Activated B cell treated with CpG ODN at 0.5 μM for 24 hours (primary cell): ENCODE measurements at regions of chr2 and their contacts with region 1.

Region 1: GRCh38 chr2:162123806-162124758 is 28.0 kb downstream of the GCG start:
- DNase-seq: no peak
- ATAC-seq: peak; percentile 53
- H3K4me3 Mint-ChIP-seq: no peak overlapping the region
- H3K27ac Mint-ChIP-seq: no peak overlapping the region
- H3K4me1 Mint-ChIP-seq: peaks cover 18% of the 10 kb centered on the region
- H3K27me3 Mint-ChIP-seq: no peaks in the 10 kb centered on the region
- CTCF ChIP-seq: peak; percentile 77

Region 2: GRCh38 chr2:161426922-161427663 is 697.0 kb before region 1 on chr2:
- CTCF ChIA-PET with region 1: no interaction called
- POLR2A ChIA-PET with region 1: no interaction called
- intact Hi-C with region 1: loop called (anchors 10 kb)
- DNase-seq: no peak
- ATAC-seq: no peak
- H3K4me3 Mint-ChIP-seq: peak overlapping the region; percentile 68
- H3K27ac Mint-ChIP-seq: no peak overlapping the region
- H3K4me1 Mint-ChIP-seq: peaks cover 31% of the 10 kb centered on the region
- H3K27me3 Mint-ChIP-seq: peaks cover 63% of the 10 kb centered on the region
- CTCF ChIP-seq: no peak

Region 3: DNA sequence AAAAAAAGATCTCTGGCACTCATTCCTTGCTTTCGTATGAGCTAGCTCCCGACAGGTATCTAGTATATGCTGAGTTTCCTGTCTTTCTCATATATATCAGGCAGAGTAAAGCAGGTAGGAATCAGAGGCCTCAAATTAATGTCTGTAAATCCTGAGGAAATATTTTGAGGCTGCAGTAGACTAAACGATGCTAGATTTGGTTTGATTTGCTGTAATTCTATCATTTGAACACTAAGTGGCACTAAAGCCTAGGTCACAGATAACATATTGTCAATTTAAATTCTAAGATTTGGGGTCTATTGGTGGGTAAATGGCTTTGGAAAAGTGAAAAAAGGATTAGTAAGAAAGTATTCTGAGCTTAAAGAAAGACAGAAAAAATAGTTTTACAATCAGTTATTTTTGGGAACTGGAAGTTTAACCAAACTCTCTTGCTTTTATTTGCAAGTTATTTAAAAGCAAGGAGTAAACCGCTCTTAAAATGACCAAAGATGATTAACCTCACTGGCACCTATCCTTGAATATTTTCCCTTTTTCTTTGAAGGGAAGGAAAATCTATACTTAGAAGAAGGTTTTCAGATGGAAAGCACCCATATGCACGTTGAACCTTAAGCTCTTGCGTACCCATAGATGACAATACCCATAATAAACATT is 537.4 kb before region 1 on chr2:
- CTCF ChIA-PET with region 1: interaction called, 10 read pairs
- POLR2A ChIA-PET with region 1: no interaction called
- intact Hi-C with region 1: loop called (anchors 1 kb)
- DNase-seq: no peak
- ATAC-seq: no peak
- H3K4me3 Mint-ChIP-seq: no peak overlapping the region
- H3K27ac Mint-ChIP-seq: no peak overlapping the region
- H3K4me1 Mint-ChIP-seq: no peaks in the 10 kb centered on the region
- H3K27me3 Mint-ChIP-seq: no peaks in the 10 kb centered on the region
- CTCF ChIP-seq: no peak

Region 4: GRCh38 chr2:162007447-162008040 is 116.5 kb before region 1 on chr2:
- CTCF ChIA-PET with region 1: interaction called, 6 read pairs
- POLR2A ChIA-PET with region 1: no interaction called
- intact Hi-C with region 1: loop called (anchors 1 kb)
- DNase-seq: no peak
- ATAC-seq: no peak
- H3K4me3 Mint-ChIP-seq: no peak overlapping the region
- H3K27ac Mint-ChIP-seq: no peak overlapping the region
- H3K4me1 Mint-ChIP-seq: no peaks in the 10 kb centered on the region
- H3K27me3 Mint-ChIP-seq: no peaks in the 10 kb centered on the region
- CTCF ChIP-seq: peak; percentile 75